ENCODE measurements at regions of chr12 and their contacts with region 1.

Region 1: DNA sequence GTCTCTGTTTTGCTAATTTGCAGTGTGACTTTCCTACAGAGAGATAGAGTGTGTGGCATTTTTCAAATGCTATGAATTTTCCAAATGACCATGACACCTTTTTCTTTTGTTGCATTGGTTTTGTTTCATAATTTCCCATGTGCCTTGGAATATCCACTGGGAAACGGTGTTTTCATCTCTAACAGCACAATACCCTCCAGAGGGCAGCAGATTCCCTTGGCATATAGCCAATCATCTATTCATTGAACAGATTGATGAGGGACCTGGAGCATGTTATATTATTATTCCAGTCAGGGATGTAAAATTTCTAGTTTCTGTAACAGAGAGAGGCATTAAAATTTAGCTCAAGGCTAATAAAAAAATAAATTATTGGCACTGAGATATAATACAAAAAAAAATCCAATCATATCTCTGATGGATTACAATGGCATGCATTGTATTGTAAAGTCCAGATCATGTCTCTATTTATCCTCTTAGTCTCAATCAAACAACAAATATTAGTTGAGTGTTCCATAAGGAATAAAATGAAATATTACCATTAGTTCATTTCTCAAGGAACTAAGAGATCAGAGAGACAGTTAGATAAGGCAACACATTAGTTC is 29.6 kb upstream of the NTN4 start:
- DNase-seq: no peak
- ATAC-seq: no peak
- H3K4me3 ChIP-seq: no peak overlapping the region
- H3K27ac ChIP-seq: no peak overlapping the region
- H3K4me1 ChIP-seq: no peaks in the 10 kb centered on the region
- H3K27me3 ChIP-seq: no peaks in the 10 kb centered on the region

Region 2: DNA sequence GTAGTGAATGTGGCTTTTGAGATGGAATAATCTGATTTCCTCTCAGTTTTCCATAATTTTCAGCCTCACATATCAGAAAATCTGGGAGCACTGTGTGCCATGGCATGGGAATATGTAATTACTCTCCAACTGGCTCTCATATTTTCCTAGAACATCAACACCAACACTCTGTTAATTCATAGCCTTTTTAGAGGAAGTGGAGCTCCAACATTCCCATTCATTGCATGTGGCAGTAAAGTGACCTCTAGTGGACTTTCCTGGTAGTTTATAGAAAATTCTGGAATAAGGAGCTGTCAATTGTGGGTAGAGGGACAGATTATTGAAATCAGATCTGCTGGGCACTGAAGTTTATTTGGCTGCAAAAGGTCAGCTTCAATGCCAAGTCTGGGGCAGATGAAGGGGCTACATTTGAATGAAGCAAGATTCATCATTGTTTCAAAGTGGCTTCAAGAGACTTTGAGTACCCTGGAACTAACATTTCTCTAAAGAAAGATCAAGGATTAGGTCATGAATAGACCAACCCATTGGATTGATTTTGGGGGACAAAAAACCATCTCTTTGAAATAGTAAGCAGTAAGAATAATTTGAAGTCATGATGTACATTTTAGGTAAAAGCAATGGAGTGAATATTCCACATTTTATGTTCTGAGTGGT is 245.3 kb before region 1 on chr12:
- intact Hi-C with region 1: loop called in 1 of 2 experiments (anchors 2 kb)
- DNase-seq: no peak
- ATAC-seq: peak; percentile 59
- H3K4me3 ChIP-seq: no peak overlapping the region
- H3K27ac ChIP-seq: no peak overlapping the region
- H3K4me1 ChIP-seq: no peaks in the 10 kb centered on the region
- H3K27me3 ChIP-seq: no peaks in the 10 kb centered on the region

Region 3: DNA sequence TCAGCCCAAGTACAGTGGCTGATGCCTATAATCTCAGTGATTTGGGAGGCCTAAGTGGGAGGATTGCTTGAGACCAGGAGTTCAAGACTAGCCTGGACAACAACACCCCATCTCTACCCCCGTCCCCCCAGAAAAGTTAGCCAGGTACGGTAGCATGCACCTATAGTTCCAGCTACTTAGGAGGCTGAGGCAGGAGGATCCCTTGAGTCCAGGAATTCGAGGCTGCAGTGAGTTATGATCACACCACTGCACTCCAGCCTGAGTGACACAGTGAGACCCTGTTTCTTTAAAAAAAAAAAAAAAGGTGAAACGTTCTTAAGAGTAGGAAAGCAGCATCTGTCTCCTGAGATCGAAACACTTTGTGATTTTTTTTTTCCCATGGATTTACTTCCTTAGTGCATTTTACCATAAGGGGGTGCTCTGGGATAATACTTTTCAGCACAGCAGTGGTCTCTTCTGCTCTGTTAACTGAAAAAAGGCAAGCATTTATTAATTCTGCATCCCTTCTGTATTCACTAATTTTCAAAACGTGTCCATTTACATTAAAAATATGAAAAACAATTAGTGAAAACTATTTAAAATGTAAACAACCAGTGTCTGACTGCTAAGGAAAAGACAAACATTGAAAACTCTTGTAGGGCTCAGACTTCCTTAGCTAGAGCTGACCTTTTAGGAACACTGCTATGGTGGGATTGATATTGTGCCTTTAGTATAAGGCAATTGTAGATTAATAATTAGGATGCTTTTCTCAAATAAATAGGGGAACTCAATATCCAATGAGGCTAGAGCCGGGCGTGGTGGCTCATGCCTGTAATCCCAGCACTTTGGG is 237.8 kb before region 1 on chr12:
- intact Hi-C with region 1: loop called (anchors 2 kb)
- DNase-seq: no peak
- ATAC-seq: no peak
- H3K4me3 ChIP-seq: no peak overlapping the region
- H3K27ac ChIP-seq: no peak overlapping the region
- H3K4me1 ChIP-seq: no peaks in the 10 kb centered on the region
- H3K27me3 ChIP-seq: no peaks in the 10 kb centered on the region

Region 4: GRCh38 chr12:95623585-95624042 is 196.6 kb before region 1 on chr12:
- intact Hi-C with region 1: loop called (anchors 2 to 5 kb)
- DNase-seq: peak; percentile 82 to 88
- ATAC-seq: peak; percentile 80
- H3K4me3 ChIP-seq: no peak overlapping the region
- H3K27ac ChIP-seq: no peak overlapping the region
- H3K4me1 ChIP-seq: no peaks in the 10 kb centered on the region
- H3K27me3 ChIP-seq: no peaks in the 10 kb centered on the region

Region 5: GRCh38 chr12:95663525-95663924 is 156.7 kb before region 1 on chr12:
- intact Hi-C with region 1: no loop called
- DNase-seq: no peak
- ATAC-seq: no peak
- H3K4me3 ChIP-seq: no peak overlapping the region
- H3K27ac ChIP-seq: no peak overlapping the region
- H3K4me1 ChIP-seq: peaks cover 2 to 3% of the 10 kb centered on the region in 2 donors
- H3K27me3 ChIP-seq: no peaks in the 10 kb centered on the region

Region 6: DNA sequence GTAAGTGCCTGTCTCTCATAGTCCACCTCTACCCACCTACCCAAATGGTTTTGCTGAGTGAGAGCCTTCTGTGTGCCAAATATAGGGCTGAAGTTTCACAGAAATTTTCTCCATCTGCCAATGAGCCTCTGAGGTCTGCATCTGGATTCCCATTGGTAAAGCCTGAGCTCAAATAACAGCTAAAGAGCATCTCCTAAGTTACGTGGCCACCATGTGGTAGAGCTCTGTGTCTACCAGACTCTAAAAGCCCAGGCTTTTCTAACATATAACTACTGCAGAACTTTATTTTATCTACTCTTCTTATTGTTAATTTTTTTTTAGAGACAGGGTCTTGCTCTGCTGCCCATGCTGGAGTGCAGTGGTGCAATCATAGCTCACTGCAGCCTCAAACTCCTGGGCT is 138.9 kb after region 1 on chr12:
- intact Hi-C with region 1: no loop called
- DNase-seq: no peak
- ATAC-seq: no peak
- H3K4me3 ChIP-seq: no peak overlapping the region
- H3K27ac ChIP-seq: no peak overlapping the region
- H3K4me1 ChIP-seq: no peaks in the 10 kb centered on the region
- H3K27me3 ChIP-seq: no peaks in the 10 kb centered on the region

Region 7: GRCh38 chr12:95998611-95999286 is 178.5 kb after region 1 on chr12:
- intact Hi-C with region 1: loop called in 1 of 2 experiments (anchors 5 kb)
- DNase-seq: no peak
- ATAC-seq: peak; percentile 86
- H3K4me3 ChIP-seq: no peak overlapping the region
- H3K27ac ChIP-seq: no peak overlapping the region
- H3K4me1 ChIP-seq: no peaks in the 10 kb centered on the region
- H3K27me3 ChIP-seq: no peaks in the 10 kb centered on the region

Measured in aorta (tissue), 5 donors.